Endothelial cell of umbilical vein (primary cell): ENCODE measurements at regions of chr2 and their contacts with region 1.

Region 1: GRCh38 chr2:73907840-73908452 is 15.1 kb downstream of the ACTG2 start:
- DNase-seq: no peak
- H3K4me3 ChIP-seq: no peak overlapping the region
- H3K27ac ChIP-seq: no peak overlapping the region
- H3K4me1 ChIP-seq: no peaks in the 10 kb centered on the region
- H3K27me3 ChIP-seq: peaks cover 0 to 5% of the 10 kb centered on the region in 2 experiments
- CTCF ChIP-seq: peak; percentile 8 to 9
- POLR2A ChIP-seq: no peak

Region 2: GRCh38 chr2:73700131-73700611 is 207.8 kb before region 1 on chr2:
- CTCF ChIA-PET with region 1: no interaction called
- POLR2A ChIA-PET with region 1: no interaction called
- dilution Hi-C with region 1: no loop called
- intact Hi-C with region 1: no loop called
- DNase-seq: peak; percentile 36
- H3K4me3 ChIP-seq: no peak overlapping the region
- H3K27ac ChIP-seq: no peak overlapping the region
- H3K4me1 ChIP-seq: peaks cover 5% of the 10 kb centered on the region
- H3K27me3 ChIP-seq: peaks cover 0 to 30% of the 10 kb centered on the region in 2 experiments
- CTCF ChIP-seq: no peak
- POLR2A ChIP-seq: no peak

Region 3: GRCh38 chr2:73812635-73813034 is 95.3 kb before region 1 on chr2:
- CTCF ChIA-PET with region 1: no interaction called
- POLR2A ChIA-PET with region 1: interaction called, 10 read pairs
- dilution Hi-C with region 1: no loop called
- intact Hi-C with region 1: no loop called
- DNase-seq: no peak
- H3K4me3 ChIP-seq: no peak overlapping the region
- H3K27ac ChIP-seq: no peak overlapping the region
- H3K4me1 ChIP-seq: no peaks in the 10 kb centered on the region
- H3K27me3 ChIP-seq: peaks cover 3 to 15% of the 10 kb centered on the region in 2 experiments
- CTCF ChIP-seq: no peak
- POLR2A ChIP-seq: no peak

Region 4: DNA sequence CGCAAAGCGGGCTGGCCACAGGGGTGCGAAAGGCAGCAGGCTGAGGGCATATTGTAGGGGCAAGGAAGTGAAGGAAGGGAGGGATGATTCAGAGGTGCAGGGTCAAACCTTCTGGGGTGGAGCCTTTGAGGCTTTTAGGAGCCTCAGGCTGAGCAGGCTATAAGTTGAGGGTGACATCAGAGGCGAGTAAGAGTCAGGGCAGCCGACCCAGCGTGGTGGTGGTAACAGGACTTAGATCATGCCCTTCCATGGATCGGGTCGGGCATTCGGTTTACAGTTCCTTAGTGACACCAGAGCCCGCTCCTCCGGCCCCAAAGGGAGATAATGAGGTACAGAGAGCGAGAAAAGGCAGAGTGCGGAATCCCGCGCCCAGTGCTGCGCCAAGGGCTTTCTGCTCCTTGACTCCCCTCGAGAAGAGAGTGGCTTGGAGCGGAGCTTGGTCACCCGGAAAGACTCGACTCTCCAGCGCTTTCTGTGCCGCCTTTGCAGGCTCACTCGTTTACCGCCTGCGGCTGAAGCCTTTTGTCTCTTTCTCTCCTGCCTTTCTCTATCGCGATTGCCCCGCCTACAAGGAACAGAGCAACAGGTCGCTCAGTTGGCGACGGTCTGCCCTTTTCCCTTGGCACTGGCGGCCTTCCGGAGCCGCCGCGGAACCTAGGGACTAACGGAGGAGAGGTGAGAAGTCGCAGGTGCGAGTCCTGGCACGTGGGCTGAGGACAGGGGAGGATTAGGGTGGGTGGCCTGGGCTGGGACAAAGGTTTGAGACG is 590.7 kb after region 1 on chr2:
- CTCF ChIA-PET with region 1: no interaction called
- POLR2A ChIA-PET with region 1: no interaction called
- dilution Hi-C with region 1: no loop called
- intact Hi-C with region 1: no loop called
- DNase-seq: peak; percentile 35
- H3K4me3 ChIP-seq: peak overlapping the region in 2 of 3 experiments; percentile 19 to 25
- H3K27ac ChIP-seq: no peak overlapping the region
- H3K4me1 ChIP-seq: peaks cover 30% of the 10 kb centered on the region
- H3K27me3 ChIP-seq: peaks cover 23 to 40% of the 10 kb centered on the region in 2 experiments
- CTCF ChIP-seq: no peak
- POLR2A ChIP-seq: no peak